Astrocyte of the cerebellum (primary cell): ENCODE measurements at regions of chr11 and their contacts with region 1.

Region 1: GRCh38 chr11:3854977-3855807 is at the start of gene STIM1:
- DNase-seq: peak; percentile 83
- H3K4me3 ChIP-seq: peak within 1 kb of the TSS; percentile 92
- CTCF ChIP-seq: peak; percentile 89

Region 2: GRCh38 chr11:3723014-3723708 is 132.0 kb before region 1 on chr11:
- in situ Hi-C with region 1: no loop called
- DNase-seq: peak; percentile 88
- H3K4me3 ChIP-seq: no peak overlapping the region
- CTCF ChIP-seq: no peak

Region 3: DNA sequence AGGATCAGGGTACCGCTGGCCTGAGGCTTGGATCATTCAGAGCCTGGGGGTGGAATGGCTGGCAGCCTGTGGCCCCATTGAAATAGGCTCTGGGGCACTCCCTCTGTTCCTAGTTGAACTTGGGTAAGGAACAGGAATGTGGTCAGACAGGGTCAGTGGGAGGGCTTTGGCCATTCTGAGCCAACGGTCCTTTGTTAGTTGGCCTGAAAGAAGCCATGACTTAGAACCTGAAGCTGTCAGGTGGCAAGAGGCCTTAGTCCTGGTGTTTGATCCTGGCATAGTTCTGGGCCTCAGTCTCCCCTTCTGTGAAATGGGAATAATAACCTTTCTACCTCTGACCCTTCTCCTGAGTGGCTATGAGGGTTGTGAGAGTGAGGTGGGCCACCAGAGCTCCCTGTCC is 38.5 kb before region 1 on chr11:
- in situ Hi-C with region 1: no loop called
- DNase-seq: no peak
- H3K4me3 ChIP-seq: no peak overlapping the region
- CTCF ChIP-seq: no peak

Region 4: GRCh38 chr11:3894128-3894731 is 39.0 kb after region 1 on chr11:
- in situ Hi-C with region 1: no loop called
- DNase-seq: no peak
- H3K4me3 ChIP-seq: no peak overlapping the region
- CTCF ChIP-seq: no peak

Region 5: DNA sequence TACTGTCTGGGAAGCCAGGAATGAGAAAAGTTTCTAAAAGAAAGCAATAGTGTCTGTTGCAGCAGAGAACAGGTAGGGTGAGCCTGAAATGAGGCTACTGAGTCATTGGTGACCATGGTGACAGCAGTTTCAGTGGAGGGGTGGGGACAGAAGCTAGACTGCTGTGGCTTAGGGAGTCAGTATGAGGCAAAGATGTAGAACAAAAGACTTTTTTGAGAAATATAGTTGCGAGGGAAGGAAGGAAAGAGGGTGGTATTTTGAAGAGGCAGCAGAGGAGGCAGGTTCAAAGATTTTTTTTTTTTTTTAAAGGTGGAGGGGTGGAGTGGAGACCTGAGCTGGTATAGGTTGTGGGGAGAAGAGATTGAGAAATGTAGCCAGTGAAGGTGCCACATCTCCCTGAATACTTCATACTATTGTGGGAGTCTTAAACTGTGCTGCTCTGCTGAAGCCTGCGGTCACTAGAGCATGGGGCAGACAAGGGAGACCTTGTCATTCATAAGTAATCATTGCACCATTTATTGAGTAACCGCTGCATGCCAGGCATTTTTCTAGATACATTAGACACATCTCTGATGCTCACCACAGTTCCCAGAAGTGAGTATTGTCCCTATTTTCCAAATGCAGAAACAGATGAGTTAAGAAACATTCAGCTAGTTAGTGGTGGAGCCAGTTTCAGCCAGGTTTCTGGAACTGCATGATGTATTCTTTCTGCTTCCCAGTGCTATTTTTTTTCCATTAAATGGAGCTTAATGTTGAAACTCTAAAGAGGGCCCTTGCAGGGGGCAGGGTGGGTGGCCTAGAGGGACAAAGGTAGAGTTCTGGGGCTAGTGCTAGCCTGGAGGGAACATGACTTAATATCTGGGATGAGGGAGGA is 50.1 kb after region 1 on chr11:
- in situ Hi-C with region 1: no loop called
- DNase-seq: no peak
- H3K4me3 ChIP-seq: no peak overlapping the region
- CTCF ChIP-seq: no peak

Region 6: DNA sequence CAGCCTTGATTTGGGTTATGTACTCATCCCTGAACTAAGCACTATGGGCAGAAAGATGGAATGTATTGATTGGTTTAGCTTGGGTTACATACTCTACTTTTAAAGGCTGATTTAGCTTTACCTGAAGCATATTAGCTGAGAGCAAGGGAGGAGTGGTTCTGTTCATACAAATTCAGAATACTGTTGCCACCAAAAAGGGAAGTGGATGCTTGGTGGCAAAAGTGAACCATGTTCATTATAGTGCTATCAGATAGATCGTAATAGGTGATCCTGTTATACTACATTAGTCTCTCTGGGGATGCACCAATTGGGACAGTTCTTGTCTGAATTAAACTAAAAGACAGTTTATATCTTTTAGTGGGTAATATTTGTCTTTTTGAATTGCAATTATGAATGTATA is 194.9 kb after region 1 on chr11:
- in situ Hi-C with region 1: loop called (anchors 10 kb)
- DNase-seq: no peak
- H3K4me3 ChIP-seq: no peak overlapping the region
- CTCF ChIP-seq: no peak